ENCODE measurements at regions of chr3 and their contacts with region 1.

Region 1: DNA sequence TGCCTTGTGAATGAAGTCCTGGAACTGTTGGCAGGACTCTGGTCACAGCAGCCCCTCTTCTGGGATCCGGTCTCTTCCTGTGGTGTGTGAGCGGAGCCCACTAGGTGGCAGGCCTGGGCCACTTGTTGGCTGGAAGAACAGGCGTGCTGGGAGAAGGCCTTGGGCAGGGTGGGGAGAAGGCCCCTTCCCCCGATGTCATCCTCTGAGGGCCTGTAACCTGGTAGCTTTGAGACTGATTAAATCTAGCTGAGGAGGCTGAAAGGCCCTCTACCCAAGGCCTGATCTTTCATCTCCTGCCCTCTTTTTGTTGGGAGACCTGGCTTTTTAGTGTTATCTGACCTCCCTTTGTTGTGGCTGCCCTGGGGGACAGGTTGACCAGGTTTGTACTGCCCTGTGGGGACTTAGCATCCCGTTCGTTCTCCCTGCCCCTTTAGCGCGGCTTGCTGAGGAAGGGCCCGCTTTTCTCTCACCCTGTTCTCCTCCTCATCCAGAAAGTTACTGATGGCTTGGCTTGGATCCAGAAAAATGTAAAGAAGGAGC is 48.3 kb downstream of the CHCHD6 start:
- DNase-seq: peak; percentile 69
- ATAC-seq: peak; percentile 95
- H3K4me3 Mint-ChIP-seq: no peak overlapping the region
- H3K27ac Mint-ChIP-seq: no peak overlapping the region
- H3K4me1 Mint-ChIP-seq: peaks cover 3% of the 10 kb centered on the region
- H3K27me3 Mint-ChIP-seq: no peaks in the 10 kb centered on the region
- CTCF ChIP-seq: peak; percentile 37

Region 2: GRCh38 chr3:126522363-126522788 is 230.0 kb before region 1 on chr3:
- CTCF ChIA-PET with region 1: no interaction called
- POLR2A ChIA-PET with region 1: no interaction called
- intact Hi-C with region 1: loop called (anchors 10 kb)
- DNase-seq: peak; percentile 37
- ATAC-seq: no peak
- H3K4me3 Mint-ChIP-seq: no peak overlapping the region
- H3K27ac Mint-ChIP-seq: no peak overlapping the region
- H3K4me1 Mint-ChIP-seq: no peaks in the 10 kb centered on the region
- H3K27me3 Mint-ChIP-seq: peaks cover 24% of the 10 kb centered on the region
- CTCF ChIP-seq: peak; percentile 81

Region 3: DNA sequence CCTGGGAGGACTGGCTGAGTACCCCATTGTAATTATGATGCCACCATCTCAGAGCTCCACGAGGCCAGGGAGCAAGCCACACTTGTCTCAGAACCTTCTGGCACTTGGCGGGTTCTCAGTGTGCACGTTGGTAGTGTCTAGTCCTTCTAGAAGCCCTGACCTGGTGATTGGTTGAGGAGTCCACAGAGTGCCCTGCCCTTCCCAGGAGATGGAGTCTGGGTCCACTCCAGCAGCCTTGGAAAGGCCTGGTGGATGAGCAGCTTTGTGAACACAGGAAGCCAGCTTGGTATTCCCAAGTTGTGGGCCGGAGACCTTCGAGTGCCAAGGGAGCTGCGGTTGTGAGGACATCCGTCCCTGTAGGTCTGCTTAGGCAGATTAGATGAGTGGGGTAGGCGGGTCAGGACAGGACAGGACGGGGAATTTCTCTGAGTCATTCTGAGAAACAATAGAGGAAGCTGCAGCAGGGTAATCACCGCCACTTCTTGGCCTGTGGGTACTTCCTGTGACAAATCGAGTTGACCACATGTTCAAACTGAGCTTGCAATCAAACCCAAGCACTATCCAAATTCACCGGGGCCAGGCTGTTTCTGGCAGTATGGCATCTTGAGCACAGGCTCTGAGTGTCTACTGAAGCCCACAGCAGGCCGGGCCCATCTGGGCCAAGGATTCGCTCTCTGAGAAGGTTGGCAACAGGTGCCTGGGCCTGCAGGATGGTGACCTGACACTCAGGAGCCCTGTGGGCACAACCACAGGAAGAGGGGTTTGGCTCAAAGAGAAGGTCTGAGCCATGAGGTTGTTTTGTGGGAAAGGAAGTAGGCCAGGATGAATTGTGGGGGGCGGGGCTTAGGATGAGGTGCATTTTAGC is 159.0 kb after region 1 on chr3:
- CTCF ChIA-PET with region 1: interaction called, 7 read pairs
- POLR2A ChIA-PET with region 1: no interaction called
- intact Hi-C with region 1: loop called (anchors 1 kb)
- DNase-seq: peak; percentile 65
- ATAC-seq: peak; percentile 94
- H3K4me3 Mint-ChIP-seq: peak overlapping the region; percentile 75
- H3K27ac Mint-ChIP-seq: peak overlapping the region; percentile 95
- H3K4me1 Mint-ChIP-seq: peaks cover 44% of the 10 kb centered on the region
- H3K27me3 Mint-ChIP-seq: peaks cover 36% of the 10 kb centered on the region
- CTCF ChIP-seq: no peak

Region 4: DNA sequence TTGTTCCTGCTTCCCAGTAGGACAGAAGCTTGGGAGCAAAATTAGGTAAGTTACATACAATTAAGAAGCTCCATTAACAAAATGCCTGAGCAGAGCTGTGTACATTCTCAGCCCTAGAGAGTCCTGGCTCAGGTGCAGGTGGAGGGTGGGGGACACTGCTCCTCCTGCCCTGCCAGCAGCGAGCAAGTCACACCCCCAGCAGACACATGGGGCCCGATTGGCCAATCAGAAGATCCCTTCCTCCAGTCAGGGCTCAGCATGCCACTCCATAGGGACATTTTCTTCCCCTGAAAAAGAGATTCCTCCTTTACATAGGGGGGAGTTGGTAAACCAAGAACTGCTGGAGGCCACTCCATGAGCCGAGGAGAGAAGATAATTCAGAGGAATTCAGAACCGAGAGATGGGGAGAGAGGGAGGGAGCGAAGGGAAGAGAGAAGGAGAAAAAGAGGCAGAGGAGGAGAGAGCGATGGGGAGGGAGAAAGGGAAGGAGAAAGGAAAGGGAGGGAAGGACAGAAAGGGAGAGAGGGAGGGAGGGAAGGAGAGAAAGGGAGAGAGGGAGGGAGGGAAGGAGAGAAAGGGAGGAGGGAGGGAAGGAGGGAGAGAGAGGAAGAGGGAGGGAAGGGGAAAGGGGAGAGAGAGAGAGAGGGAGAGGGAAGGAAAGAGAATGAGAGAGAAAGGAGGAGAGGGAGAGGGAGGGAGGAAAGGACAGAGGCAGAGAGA is 292.8 kb after region 1 on chr3:
- CTCF ChIA-PET with region 1: no interaction called
- POLR2A ChIA-PET with region 1: no interaction called
- intact Hi-C with region 1: no loop called
- DNase-seq: no peak
- ATAC-seq: no peak
- H3K4me3 Mint-ChIP-seq: no peak overlapping the region
- H3K27ac Mint-ChIP-seq: no peak overlapping the region
- H3K4me1 Mint-ChIP-seq: no peaks in the 10 kb centered on the region
- H3K27me3 Mint-ChIP-seq: peaks cover 23% of the 10 kb centered on the region
- CTCF ChIP-seq: no peak

Region 5: GRCh38 chr3:127182471-127183367 is 430.3 kb after region 1 on chr3:
- CTCF ChIA-PET with region 1: interaction called, 3 read pairs
- POLR2A ChIA-PET with region 1: no interaction called
- intact Hi-C with region 1: loop called (anchors 5 kb)
- DNase-seq: no peak
- ATAC-seq: no peak
- H3K4me3 Mint-ChIP-seq: no peak overlapping the region
- H3K27ac Mint-ChIP-seq: no peak overlapping the region
- H3K4me1 Mint-ChIP-seq: no peaks in the 10 kb centered on the region
- H3K27me3 Mint-ChIP-seq: peaks cover 3% of the 10 kb centered on the region
- CTCF ChIP-seq: no peak

Region 6: DNA sequence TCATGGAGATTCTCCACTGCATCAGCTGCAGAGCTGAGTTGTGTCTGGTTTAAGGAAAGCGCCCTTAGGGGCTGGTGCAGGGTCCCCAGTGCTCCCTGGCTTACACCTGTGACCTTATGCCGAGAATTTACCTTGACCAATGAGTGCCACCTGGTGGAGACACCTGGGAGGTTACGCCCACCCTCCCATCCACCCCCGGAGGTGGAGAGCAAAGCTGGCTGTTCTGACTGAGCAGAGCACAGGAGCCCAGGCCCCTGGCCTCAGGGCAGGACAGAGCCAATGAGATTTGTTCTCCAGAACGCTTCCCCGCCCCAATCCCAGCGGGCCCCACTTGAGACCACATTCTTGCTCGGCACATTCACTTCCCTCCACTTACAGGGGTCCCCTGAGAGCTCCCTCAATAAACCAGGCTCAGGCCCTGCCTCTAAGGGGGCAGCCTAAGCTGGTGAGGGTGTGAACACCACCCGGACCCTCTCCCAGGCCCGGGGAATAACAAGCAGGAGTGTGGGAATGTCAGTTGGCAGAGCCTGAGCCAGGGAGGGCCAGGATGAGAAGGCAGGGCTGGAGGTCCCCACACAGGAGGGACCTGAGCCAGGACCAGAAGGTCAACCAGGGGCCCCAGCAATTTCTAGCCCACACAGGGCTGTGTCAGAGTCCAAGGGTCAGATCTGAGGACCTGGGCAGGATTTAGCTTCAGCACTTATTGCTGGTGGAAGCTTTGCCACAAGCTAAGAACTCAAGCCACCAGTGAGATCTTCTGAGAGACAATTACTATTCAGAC is 721.1 kb after region 1 on chr3:
- CTCF ChIA-PET with region 1: no interaction called
- POLR2A ChIA-PET with region 1: no interaction called
- intact Hi-C with region 1: loop called (anchors 1 kb)
- DNase-seq: no peak
- ATAC-seq: no peak
- H3K4me3 Mint-ChIP-seq: no peak overlapping the region
- H3K27ac Mint-ChIP-seq: no peak overlapping the region
- H3K4me1 Mint-ChIP-seq: no peaks in the 10 kb centered on the region
- H3K27me3 Mint-ChIP-seq: peaks cover 2% of the 10 kb centered on the region
- CTCF ChIP-seq: no peak

Measured in activated B cell treated with CpG ODN at 0.5 μM for 24 hours (primary cell).